CD14-positive monocyte (primary cell): ENCODE measurements at regions of chr10 and their contacts with region 1.

Region 1: DNA sequence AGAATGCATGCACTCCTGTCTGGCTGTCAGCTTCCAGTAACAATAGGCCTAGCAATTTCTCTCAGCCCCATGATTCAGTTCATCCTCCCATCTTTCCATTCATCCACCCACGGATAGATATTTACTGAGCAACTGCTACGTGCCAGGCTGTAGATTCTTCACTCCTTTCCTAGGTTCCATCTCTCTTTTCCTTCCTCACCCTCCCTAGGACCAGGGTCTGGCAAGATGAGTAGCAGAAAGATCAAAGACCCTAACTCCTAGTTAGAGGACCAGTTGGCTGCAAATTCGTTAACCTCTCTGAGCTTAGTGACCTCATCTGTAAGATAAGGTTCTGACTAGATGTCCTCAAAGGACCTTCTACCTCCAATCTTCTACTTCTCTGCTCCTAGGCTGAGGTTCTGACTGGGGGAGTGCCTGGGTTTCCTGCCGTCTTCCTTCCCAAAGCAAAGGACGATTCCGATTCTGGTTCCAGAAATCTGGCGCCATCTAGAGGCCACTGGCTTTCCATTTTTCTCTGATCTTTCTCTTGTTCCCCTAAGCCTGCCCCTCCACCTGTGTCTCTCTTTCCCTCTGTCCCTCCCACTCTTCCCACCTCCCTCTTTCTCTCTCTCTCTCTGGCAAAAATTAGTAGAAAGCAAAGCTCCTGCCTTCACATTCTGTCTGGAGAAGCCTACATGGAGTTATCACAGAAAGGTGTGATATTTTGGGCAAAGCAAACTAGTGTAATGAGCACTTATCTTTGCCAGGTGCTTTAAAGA is 26.2 kb downstream of the TBATA start:
- DNase-seq: peak; percentile 45 to 63 (median 57)
- H3K4me3 ChIP-seq: no peak overlapping the region
- H3K4me3 Mint-ChIP-seq: no peak overlapping the region
- H3K27ac ChIP-seq: no peak overlapping the region
- H3K27ac Mint-ChIP-seq: peak overlapping the region in 1 of 7 donors; percentile 18
- H3K4me1 ChIP-seq: peaks cover 10 to 15% of the 10 kb centered on the region in 2 donors
- H3K4me1 Mint-ChIP-seq: peaks cover 21% of the 10 kb centered on the region
- H3K27me3 ChIP-seq: no peaks in the 10 kb centered on the region
- H3K27me3 Mint-ChIP-seq: peaks cover 0 to 4% (median 2%) of the 10 kb centered on the region in 3 donors
- CTCF ChIP-seq: peak; percentile 86

Region 2: DNA sequence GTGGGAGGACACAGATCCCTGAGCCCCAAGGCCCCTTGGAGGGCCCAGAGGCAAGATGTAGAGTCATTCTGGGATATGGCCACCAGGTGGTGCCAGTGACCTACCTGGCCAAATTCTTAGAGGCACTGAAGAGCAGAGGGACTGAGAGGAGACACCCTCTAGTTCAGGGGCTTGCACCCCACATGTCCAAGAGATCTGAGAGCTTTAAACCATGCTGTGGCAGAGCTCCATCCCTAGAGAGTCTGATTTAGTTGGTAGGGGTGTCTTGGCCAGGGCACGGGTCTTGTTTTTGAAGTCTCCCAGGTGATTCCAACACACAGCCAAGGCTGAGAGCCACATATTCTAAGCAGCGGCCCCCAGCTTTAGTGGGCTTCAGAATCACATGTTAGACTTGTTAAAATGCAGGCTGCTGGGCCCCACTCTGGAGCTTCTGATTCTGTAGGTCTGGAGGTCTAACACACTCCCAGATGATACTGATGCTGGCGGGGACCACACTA is 208.9 kb before region 1 on chr10:
- intact Hi-C with region 1: loop called (anchors 1 to 2 kb)
- DNase-seq: peak; percentile 48 to 65 (median 58)
- H3K4me3 ChIP-seq: no peak overlapping the region
- H3K4me3 Mint-ChIP-seq: no peak overlapping the region
- H3K27ac ChIP-seq: no peak overlapping the region
- H3K27ac Mint-ChIP-seq: no peak overlapping the region
- H3K4me1 ChIP-seq: no peaks in the 10 kb centered on the region
- H3K4me1 Mint-ChIP-seq: no peaks in the 10 kb centered on the region
- H3K27me3 ChIP-seq: no peaks in the 10 kb centered on the region
- H3K27me3 Mint-ChIP-seq: peaks cover 0 to 2% (median 1%) of the 10 kb centered on the region in 3 donors
- CTCF ChIP-seq: peak; percentile 93